Lower leg skin (tissue), 4 donors: ENCODE measurements at regions of chr18 and their contacts with region 1.

Region 1: GRCh38 chr18:69817335-69817940 is 130.2 kb downstream of the CD226 start:
- DNase-seq: no peak
- H3K4me3 ChIP-seq: no peak overlapping the region
- CTCF ChIP-seq: no peak
- POLR2A ChIP-seq: no peak

Region 2: GRCh38 chr18:69715191-69715795 is 102.1 kb before region 1 on chr18:
- intact Hi-C with region 1: no loop called
- DNase-seq: no peak
- H3K4me3 ChIP-seq: no peak overlapping the region
- CTCF ChIP-seq: no peak
- POLR2A ChIP-seq: no peak

Region 3: GRCh38 chr18:69845593-69846506 is 28.4 kb after region 1 on chr18:
- intact Hi-C with region 1: loop called (anchors 2 kb)
- DNase-seq: no peak
- H3K4me3 ChIP-seq: no peak overlapping the region
- CTCF ChIP-seq: no peak
- POLR2A ChIP-seq: no peak

Region 4: GRCh38 chr18:71049893-71050292 is 1232.5 kb after region 1 on chr18:
- intact Hi-C with region 1: loop called (anchors 5 kb)
- DNase-seq: no peak
- H3K4me3 ChIP-seq: no peak overlapping the region
- CTCF ChIP-seq: no peak
- POLR2A ChIP-seq: no peak